ENCODE measurements at regions of chr20 and their contacts with region 1.

Region 1: DNA sequence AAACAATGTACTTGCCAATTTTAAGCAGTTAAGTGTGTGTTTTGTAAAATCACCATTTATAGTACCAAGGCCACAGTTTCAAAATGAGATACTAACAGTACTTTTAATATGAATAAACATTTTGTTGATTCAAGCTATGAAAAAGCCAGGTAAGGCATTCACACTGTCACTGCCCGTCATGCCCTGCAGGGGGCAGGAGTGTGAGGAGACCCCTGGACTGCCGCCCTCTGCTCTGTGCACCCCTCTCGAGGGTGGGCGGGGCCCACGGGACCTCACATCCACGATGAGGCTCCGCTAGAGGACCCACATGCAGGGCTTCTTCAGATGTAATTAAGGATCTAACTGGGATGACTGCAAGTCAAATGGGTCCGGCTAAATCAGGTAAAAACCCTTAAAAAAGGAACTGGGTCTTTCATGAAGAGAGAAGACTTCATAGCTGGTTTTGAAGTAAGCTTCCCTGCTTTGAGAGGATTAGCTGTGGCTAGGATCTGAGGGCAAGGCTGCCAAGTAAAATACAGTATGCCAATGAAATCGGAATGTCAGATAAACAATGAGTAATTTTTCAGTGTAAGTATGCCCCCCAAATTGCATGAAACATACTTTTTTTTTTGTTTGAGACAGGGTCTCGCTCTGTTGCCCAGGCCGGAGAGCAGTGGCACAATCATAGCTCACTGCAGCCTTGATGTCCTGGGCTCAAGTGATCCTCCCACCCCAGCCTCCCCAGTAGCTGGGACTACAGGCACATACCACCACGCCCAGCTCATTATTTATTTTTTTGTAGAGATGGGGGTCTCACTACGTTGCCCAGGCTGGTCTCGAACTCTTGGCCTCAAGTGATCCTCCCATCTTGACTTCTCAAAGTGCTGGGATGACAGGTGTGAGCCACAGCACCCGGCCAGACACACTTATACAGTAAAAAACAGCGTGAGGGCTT is 18.7 kb downstream of the DIDO1 start:
- DNase-seq: peak in 4 of 9 experiments; percentile 60 to 74 (median 63)
- ATAC-seq: peak; percentile 96
- H3K4me3 ChIP-seq: no peak overlapping the region
- H3K4me3 Mint-ChIP-seq: no peak overlapping the region
- H3K27ac ChIP-seq: no peak overlapping the region
- H3K27ac Mint-ChIP-seq: peak overlapping the region; percentile 37
- H3K4me1 ChIP-seq: peaks cover 7% of the 10 kb centered on the region
- H3K4me1 Mint-ChIP-seq: peaks cover 28% of the 10 kb centered on the region
- H3K27me3 ChIP-seq: no peaks in the 10 kb centered on the region
- H3K27me3 Mint-ChIP-seq: no peaks in the 10 kb centered on the region
- CTCF ChIP-seq: peak; percentile 70

Region 2: GRCh38 chr20:62887147-62887859 is 20.3 kb before region 1 on chr20:
- CTCF ChIA-PET with region 1: interaction called, 11 read pairs
- POLR2A ChIA-PET with region 1: no interaction called
- intact Hi-C with region 1: no loop called
- DNase-seq: peak in 7 of 9 experiments; percentile 23 to 70 (median 51)
- ATAC-seq: peak; percentile 48
- H3K4me3 ChIP-seq: no peak overlapping the region
- H3K4me3 Mint-ChIP-seq: no peak overlapping the region
- H3K27ac ChIP-seq: no peak overlapping the region
- H3K27ac Mint-ChIP-seq: peak overlapping the region; percentile 32
- H3K4me1 ChIP-seq: peaks cover 28% of the 10 kb centered on the region
- H3K4me1 Mint-ChIP-seq: peaks cover 23% of the 10 kb centered on the region
- H3K27me3 ChIP-seq: no peaks in the 10 kb centered on the region
- H3K27me3 Mint-ChIP-seq: no peaks in the 10 kb centered on the region
- CTCF ChIP-seq: no peak

Region 3: GRCh38 chr20:62921119-62921687 is 13.6 kb after region 1 on chr20:
- CTCF ChIA-PET with region 1: interaction called, 157 read pairs
- POLR2A ChIA-PET with region 1: interaction called, 11 read pairs
- intact Hi-C with region 1: loop called in 1 of 2 experiments (anchors 2 kb)
- DNase-seq: peak; percentile 20 to 85 (median 65)
- ATAC-seq: peak; percentile 66
- H3K4me3 ChIP-seq: peak overlapping the region in 1 of 2 experiments; percentile 18
- H3K4me3 Mint-ChIP-seq: peak overlapping the region; percentile 83
- H3K27ac ChIP-seq: peak overlapping the region in 1 of 2 experiments; percentile 62
- H3K27ac Mint-ChIP-seq: peak overlapping the region; percentile 89
- H3K4me1 ChIP-seq: peaks cover 89% of the 10 kb centered on the region
- H3K4me1 Mint-ChIP-seq: peaks cover 82% of the 10 kb centered on the region
- H3K27me3 ChIP-seq: no peaks in the 10 kb centered on the region
- H3K27me3 Mint-ChIP-seq: no peaks in the 10 kb centered on the region
- CTCF ChIP-seq: peak; percentile 80

Measured in CD8-positive, alpha-beta T cell (primary cell).